GM18951 (cell line): ENCODE measurements at regions of chr17 and their contacts with region 1.

Region 1: GRCh38 chr17:7045909-7046724 is 2.2 kb upstream of the SLC16A11 start:
- POLR2A ChIP-seq: no peak

Region 2: DNA sequence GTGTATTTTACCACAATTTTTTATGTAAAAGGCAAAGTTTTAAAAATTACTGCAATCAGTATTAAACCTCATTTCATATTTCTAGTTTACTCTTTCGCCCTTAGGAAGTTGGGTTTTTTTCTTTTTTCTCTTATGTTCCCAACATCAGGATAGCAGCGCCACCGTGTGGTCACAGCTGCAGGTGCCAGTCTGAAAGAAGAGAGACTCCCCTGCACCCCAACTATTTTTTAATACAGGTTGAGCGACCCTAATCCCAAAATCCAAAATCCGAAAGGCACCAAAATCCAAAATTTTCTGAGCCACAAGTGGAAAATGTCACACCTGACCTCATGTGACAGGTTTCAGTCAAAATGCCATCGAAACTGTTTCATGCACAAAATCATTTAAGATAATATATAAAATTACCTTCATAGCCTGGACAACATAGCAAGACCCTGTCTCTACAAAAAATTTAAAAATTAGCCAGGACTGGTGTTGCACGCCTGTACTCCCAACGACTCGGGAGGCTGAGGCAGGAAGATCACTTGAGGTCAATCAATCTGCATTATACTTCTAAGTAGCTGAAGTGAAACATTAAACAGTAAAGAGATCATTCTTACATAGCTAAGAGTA is 90.3 kb after region 1 on chr17:
- in situ Hi-C with region 1: loop called (anchors 5 kb)
- POLR2A ChIP-seq: no peak